Gastrocnemius medialis (tissue), 4 donors: ENCODE measurements at regions of chr18 and their contacts with region 1.

Region 1: DNA sequence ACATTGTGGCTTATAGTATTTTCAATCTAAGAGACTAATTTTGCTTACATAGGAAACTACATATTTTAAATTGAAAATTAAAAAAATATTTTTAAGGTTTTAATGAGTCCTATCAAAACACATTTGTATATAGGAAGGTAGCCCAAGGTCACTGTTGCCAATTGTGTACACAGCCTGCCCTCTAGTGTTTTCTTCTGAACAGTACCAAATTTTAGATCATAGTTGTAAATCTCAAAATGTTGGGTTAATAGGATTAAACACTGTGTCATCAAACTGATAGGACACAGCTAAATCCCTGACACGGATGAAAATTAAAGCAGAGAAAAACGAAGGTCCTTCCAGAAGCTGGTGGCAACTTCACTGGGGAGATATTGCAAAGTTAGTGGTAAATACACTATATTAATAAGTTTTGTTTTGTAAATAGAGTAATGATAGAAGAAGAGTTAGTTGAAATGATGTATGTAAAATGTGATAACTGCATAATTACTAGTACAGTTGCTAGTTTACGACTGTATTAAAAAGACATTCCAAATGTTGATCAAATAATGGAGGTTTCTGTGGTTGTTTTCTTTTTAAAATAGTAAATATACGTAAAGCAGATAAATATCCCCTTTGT is 19.7 kb downstream of the CLUL1 start:
- DNase-seq: no peak
- ATAC-seq: no peak
- H3K4me3 ChIP-seq: no peak overlapping the region
- H3K27ac ChIP-seq: no peak overlapping the region
- H3K4me1 ChIP-seq: no peaks in the 10 kb centered on the region
- H3K27me3 ChIP-seq: no peaks in the 10 kb centered on the region
- CTCF ChIP-seq: peak in 4 of 5 experiments; percentile 12 to 52 (median 32)
- POLR2A ChIP-seq: no peak

Region 2: DNA sequence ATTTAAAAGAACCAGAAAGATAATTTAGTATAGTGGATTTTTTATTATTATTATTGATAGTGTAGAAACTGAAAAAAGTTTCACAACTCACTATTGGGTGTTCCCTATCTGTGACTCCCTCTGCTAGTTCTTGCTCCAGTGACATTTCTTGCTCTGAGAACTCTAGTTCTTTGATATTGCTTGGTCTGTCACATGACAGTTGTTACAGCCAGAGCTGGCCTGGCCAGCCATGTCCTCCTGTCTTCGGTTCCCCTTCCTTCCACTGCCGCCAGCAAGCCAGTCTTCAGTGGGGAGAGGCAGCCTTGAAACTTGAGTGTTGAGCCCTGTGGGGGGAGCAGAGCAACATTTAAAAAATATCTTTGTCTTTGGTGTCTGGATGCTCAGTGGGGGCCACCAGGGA is 341.0 kb before region 1 on chr18:
- in situ Hi-C with region 1: loop called in 2 of 4 experiments (anchors 10 kb)
- intact Hi-C with region 1: no loop called
- DNase-seq: peak in 1 of 2 donors; percentile 13
- ATAC-seq: no peak
- H3K4me3 ChIP-seq: no peak overlapping the region
- H3K27ac ChIP-seq: no peak overlapping the region
- H3K4me1 ChIP-seq: no peaks in the 10 kb centered on the region
- H3K27me3 ChIP-seq: peaks cover 0 to 5% (median 0%) of the 10 kb centered on the region in 3 donors
- CTCF ChIP-seq: no peak
- POLR2A ChIP-seq: no peak

Region 3: DNA sequence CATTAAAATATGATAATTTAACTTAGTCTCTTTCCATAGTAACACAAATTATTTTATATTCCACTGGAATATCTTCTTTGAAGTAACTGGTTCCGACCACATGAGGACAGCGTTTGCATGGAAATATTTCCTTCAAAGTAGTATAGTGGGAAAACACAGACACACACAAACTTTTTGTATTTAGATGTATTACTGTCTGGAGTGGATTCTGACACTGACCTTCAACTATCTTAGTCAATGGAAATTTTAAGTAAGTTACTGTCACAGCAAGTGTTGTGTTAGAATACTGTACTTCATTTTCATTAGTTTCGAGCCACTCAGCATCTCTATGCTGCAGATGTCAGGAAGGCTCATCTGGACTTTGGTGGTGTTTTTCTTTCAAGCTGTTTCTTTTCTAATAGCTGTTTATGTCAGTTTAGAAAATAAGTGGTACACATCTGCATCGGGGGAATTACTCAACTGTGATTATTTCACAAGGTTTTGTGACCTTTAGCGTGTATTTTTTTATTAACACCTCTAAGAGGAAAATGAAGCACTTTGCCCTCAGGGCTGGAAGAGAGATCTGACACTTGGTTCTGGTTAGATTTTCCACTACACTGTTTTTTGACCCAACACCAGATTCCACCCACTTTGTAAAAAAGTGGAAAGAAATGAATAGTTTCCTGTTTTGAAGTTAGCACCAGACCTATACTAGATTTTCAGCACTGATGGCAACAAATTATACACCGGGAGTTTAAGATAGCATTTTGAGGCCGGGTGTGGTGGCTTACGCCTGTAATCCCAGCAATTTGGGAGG is 329.8 kb before region 1 on chr18:
- in situ Hi-C with region 1: loop called in 3 of 4 experiments (anchors 5 to 10 kb)
- intact Hi-C with region 1: loop called (anchors 2 kb)
- DNase-seq: no peak
- ATAC-seq: no peak
- H3K4me3 ChIP-seq: no peak overlapping the region
- H3K27ac ChIP-seq: no peak overlapping the region
- H3K4me1 ChIP-seq: no peaks in the 10 kb centered on the region
- H3K27me3 ChIP-seq: peaks cover 0 to 3% (median 0%) of the 10 kb centered on the region in 3 donors
- CTCF ChIP-seq: peak in 1 of 5 experiments; percentile 26
- POLR2A ChIP-seq: no peak

Region 4: GRCh38 chr18:293536-293935 is 323.0 kb before region 1 on chr18:
- in situ Hi-C with region 1: loop called in 3 of 4 experiments (anchors 5 to 10 kb)
- intact Hi-C with region 1: loop called (anchors 2 kb)
- DNase-seq: no peak
- ATAC-seq: peak in 1 of 2 donors; percentile 16
- H3K4me3 ChIP-seq: no peak overlapping the region
- H3K27ac ChIP-seq: no peak overlapping the region
- H3K4me1 ChIP-seq: no peaks in the 10 kb centered on the region
- H3K27me3 ChIP-seq: no peaks in the 10 kb centered on the region
- CTCF ChIP-seq: no peak
- POLR2A ChIP-seq: no peak

Region 5: GRCh38 chr18:629269-630150 is 13.0 kb after region 1 on chr18:
- in situ Hi-C with region 1: no loop called
- intact Hi-C with region 1: no loop called
- DNase-seq: no peak
- ATAC-seq: no peak
- H3K4me3 ChIP-seq: no peak overlapping the region
- H3K27ac ChIP-seq: no peak overlapping the region
- H3K4me1 ChIP-seq: no peaks in the 10 kb centered on the region
- H3K27me3 ChIP-seq: peaks cover 0 to 7% (median 0%) of the 10 kb centered on the region in 3 donors
- CTCF ChIP-seq: no peak
- POLR2A ChIP-seq: no peak